Mucosa of descending colon (tissue), 3 donors: ENCODE measurements at regions of chr1 and their contacts with region 1.

Region 1: GRCh38 chr1:54406339-54407153 is at the start of gene SSBP3:
- DNase-seq: peak; percentile 91 to 96 (median 94)
- ATAC-seq: peak; percentile 89
- H3K4me3 ChIP-seq: peak within 1 kb of the TSS; percentile 77
- H3K4me1 ChIP-seq: peaks cover 40% of the 10 kb centered on the region
- CTCF ChIP-seq: no peak
- total RNA-seq, gene SSBP3: 77.8 to 85.1 (median 82.0) TPM

Region 2: DNA sequence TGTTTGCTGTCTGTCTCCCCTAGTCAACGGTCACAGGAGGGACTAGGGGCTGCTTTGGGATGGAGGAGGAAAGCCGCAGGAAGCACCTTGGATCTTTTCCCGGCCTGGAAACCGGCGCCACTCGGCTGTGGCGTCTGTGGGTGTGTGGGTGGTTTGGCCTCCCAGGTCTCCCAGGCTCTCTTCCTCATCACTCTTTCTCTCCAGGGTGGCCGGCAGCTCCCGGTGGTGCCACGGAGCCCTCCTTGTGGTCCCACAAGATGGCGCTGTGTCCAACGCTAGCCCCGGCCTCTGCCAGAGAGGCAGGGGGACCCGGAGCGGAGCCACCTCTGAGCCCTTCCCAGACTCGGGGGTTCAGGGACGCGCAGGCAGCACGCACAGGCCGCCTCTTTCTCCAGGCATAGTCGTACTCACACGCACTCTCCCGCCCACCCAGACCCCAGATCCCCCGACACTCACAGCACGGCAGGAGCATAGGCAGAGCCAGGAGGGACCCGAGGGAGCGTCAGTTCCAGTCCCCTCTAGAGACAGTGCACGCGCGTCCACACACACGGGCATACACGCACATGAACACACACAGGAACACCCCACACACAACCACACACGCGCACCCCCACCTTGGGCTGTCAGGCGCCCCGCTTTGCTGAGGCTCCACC is 284.9 kb before region 1 on chr1:
- intact Hi-C with region 1: loop called in 1 of 2 experiments (anchors 10 kb)
- DNase-seq: peak; percentile 85 to 90 (median 85)
- ATAC-seq: peak; percentile 87
- H3K4me3 ChIP-seq: no peak overlapping the region
- H3K4me1 ChIP-seq: peaks cover 20% of the 10 kb centered on the region
- CTCF ChIP-seq: peak; percentile 66

Region 3: GRCh38 chr1:54273092-54273794 is 133.3 kb before region 1 on chr1:
- intact Hi-C with region 1: loop called in 1 of 2 experiments (anchors 5 kb)
- DNase-seq: peak in 2 of 3 donors; percentile 59 to 68
- ATAC-seq: peak; percentile 23
- H3K4me3 ChIP-seq: no peak overlapping the region
- H3K4me1 ChIP-seq: peaks cover 36% of the 10 kb centered on the region
- CTCF ChIP-seq: no peak

Region 4: GRCh38 chr1:54488779-54489626 is 82.5 kb after region 1 on chr1:
- intact Hi-C with region 1: loop called (anchors 2 to 5 kb)
- DNase-seq: peak; percentile 84 to 89 (median 85)
- ATAC-seq: peak; percentile 82
- H3K4me3 ChIP-seq: peak overlapping the region; percentile 17
- H3K4me1 ChIP-seq: peaks cover 28% of the 10 kb centered on the region
- CTCF ChIP-seq: peak; percentile 94

Region 5: GRCh38 chr1:54537611-54538010 is 131.1 kb after region 1 on chr1:
- intact Hi-C with region 1: no loop called
- DNase-seq: no peak
- ATAC-seq: no peak
- H3K4me3 ChIP-seq: no peak overlapping the region
- H3K4me1 ChIP-seq: peaks cover 7% of the 10 kb centered on the region
- CTCF ChIP-seq: no peak